PC-3 (cell line): ENCODE measurements at regions of chr5 and their contacts with region 1.

Region 1: DNA sequence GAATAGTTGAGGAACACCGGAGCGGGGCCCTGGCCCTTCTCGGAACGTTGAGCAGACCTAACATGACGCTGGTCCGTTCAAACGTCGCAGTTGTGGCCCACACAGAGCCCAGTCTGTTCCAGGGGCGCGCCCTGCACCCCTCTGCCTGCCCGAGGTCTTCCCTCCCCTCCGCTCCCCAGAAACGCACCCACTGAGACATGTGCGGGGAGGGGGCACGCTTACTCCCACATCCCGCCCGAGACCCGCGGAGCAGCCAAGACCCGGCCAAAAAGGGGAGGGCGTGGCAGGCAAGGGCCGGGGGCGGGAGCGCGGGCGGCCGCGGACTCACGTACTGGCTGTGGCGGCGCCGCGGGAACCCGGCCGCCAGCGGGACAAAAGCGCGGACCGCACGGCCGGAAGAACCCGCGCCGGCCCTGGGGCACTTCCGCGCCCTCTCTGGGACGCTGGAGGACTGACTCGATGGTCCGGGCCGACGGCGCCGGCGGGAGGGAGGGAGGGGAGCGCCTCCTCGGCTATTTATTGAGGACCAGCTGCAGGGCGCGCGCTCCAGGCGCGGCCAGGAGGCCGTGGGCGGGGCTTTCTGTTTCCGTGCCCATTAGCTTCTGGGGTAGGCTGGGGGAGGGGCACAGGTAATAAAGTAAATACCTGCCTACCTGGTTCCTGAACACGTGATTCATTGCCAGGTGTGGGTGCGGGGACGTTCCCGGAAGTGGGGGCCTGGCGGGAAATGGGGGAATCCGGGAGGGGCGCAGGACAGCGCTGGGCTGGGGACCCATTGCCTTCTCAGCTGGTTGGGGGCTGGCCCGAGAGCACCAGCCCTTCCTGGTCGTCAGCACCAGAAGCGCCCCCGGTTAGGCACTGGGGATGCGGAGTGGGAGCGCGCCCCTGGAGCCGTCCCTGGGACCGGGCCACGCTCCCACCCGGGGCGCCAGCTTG is at the start of gene ZFP62:
- DNase-seq: peak; percentile 98
- ATAC-seq: peak; percentile 94
- H3K4me3 ChIP-seq: peak within 1 kb of the TSS; percentile 99
- H3K27ac ChIP-seq: peak within 1 kb of the TSS; percentile 76
- H3K4me1 ChIP-seq: peaks cover 21% of the 10 kb centered on the region
- H3K27me3 ChIP-seq: no peaks in the 10 kb centered on the region
- CTCF ChIP-seq: 0 out of 2 replicates have a peak, but pooled peaks have one; percentile 15
- total RNA-seq, gene ZFP62: 16.6 and 24.3 TPM in 2 replicates

Region 2: GRCh38 chr5:180784497-180785097 is 76.6 kb before region 1 on chr5:
- CTCF ChIA-PET with region 1: interaction called, 7 read pairs
- POLR2A ChIA-PET with region 1: interaction called, 9 read pairs
- intact Hi-C with region 1: loop called (anchors 1 kb)
- DNase-seq: peak; percentile 92
- ATAC-seq: peak; percentile 72
- H3K4me3 ChIP-seq: no peak overlapping the region
- H3K27ac ChIP-seq: no peak overlapping the region
- H3K4me1 ChIP-seq: peaks cover 20% of the 10 kb centered on the region
- H3K27me3 ChIP-seq: no peaks in the 10 kb centered on the region
- CTCF ChIP-seq: peak; percentile 97

Region 3: DNA sequence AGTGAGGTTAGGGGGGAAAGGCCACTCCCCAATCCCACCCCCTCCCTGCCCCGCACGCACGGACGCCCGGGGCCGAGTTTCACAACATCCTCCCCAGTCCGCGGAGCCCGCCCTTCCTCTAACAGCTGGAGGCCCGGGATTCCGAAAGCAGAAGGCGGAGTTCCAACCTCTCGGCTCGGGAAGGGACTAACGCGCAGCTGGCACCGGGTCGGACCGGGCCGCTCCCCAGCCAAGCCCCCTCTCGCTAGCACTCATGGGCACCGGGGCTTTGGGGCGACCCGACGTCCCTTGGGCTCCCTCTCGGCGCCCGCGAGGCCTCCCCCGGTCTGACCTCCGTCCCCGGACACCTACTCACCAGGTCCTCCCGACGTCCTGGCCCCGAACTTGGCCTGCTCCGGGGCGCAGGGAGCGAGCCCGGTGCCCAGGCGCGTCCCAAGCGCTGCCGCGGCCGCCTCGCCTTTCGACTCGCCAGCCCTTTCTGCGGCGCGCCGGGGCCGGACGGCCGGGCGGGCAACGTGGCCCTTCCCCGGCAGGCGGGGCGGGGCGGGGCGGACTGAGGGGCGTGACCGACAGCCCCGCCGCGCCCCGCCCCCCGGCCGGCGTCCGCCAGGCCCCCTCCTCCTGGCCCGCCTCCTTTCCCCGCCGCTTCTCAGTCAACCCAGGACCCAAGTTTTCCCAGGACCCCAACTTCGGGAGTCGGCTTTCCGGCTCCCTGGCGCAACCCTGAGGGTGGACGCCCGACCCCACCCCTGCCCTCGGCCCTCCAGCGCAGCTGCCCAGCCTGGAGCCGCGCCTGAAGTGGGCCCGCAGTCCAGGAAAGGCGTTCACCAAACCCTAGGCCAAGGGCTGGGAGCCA is 58.6 kb before region 1 on chr5 and contains the start of gene MGAT1:
- CTCF ChIA-PET with region 1: interaction called, 6 read pairs
- POLR2A ChIA-PET with region 1: no interaction called
- intact Hi-C with region 1: loop called (anchors 2 kb)
- DNase-seq: peak; percentile 90
- ATAC-seq: peak; percentile 70
- H3K4me3 ChIP-seq: peak within 1 kb of the TSS; percentile 89
- H3K27ac ChIP-seq: peak within 1 kb of the TSS; percentile 70
- H3K4me1 ChIP-seq: peaks cover 51% of the 10 kb centered on the region
- H3K27me3 ChIP-seq: no peaks in the 10 kb centered on the region
- CTCF ChIP-seq: no peak
- total RNA-seq, gene MGAT1: 104 and 132 TPM in 2 replicates

Region 4: GRCh38 chr5:180810210-180810958 is 50.8 kb before region 1 on chr5:
- CTCF ChIA-PET with region 1: interaction called, 4 read pairs
- POLR2A ChIA-PET with region 1: no interaction called
- intact Hi-C with region 1: loop called (anchors 1 kb)
- DNase-seq: peak; percentile 98
- ATAC-seq: peak; percentile 84
- H3K4me3 ChIP-seq: peak overlapping the region; percentile 74
- H3K27ac ChIP-seq: peak overlapping the region; percentile 89
- H3K4me1 ChIP-seq: peaks cover 44% of the 10 kb centered on the region
- H3K27me3 ChIP-seq: no peaks in the 10 kb centered on the region
- CTCF ChIP-seq: no peak

Region 5: GRCh38 chr5:180825768-180826525 is 35.2 kb before region 1 on chr5:
- CTCF ChIA-PET with region 1: interaction called, 6 read pairs
- POLR2A ChIA-PET with region 1: no interaction called
- intact Hi-C with region 1: loop called (anchors 1 kb)
- DNase-seq: peak; percentile 99
- ATAC-seq: peak; percentile 81
- H3K4me3 ChIP-seq: no peak overlapping the region
- H3K27ac ChIP-seq: peak overlapping the region; percentile 13; the same call in 1 of the 2 replicates
- H3K4me1 ChIP-seq: peaks cover 21% of the 10 kb centered on the region
- H3K27me3 ChIP-seq: no peaks in the 10 kb centered on the region
- CTCF ChIP-seq: no peak

Region 6: DNA sequence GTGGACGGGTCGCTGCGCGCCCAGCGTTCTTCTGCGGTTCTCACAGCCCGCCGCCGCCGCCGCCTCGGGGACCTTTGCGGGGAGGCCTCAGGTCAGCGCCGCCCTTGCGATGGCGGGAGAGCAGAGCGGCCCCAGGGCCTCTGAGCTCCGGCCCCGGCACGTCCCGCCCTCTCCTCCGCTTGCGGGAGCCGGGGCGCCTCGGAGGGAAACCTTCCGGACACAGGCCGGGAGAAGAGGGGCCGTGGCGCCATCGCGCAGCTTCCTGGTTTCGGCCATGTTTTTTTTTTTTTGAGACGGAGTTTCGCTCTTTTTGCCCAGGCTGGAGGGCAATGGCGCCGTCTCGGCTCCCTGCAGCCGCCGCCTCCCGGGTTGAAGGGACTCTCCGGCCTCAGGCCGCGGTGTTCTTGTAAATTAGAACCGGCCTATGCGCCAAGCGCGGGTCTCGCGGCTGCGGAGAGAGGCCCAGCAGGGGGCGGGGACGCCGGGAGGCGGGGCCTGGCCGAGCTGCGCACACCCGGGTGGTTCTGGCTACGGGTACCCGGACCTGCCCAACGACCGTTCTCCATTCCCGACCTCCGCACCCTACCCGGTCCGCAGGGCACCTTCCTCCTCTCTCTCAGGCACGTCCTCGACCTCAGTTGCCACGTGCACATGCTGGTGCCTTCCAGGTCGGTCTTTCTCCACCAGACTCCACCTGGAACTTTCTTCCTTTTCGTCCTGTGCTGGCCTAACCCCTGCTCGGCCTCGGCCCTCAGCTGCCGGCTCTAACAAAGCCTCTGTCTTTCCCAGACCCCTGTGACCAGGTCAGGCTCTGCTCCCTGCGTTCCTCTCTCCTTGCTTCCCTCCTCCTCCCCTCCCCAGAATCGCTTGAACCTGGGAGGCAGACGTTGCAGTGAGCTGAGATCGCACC is 29.8 kb before region 1 on chr5:
- CTCF ChIA-PET with region 1: interaction called, 5 read pairs
- POLR2A ChIA-PET with region 1: no interaction called
- intact Hi-C with region 1: loop called (anchors 1 kb)
- DNase-seq: peak; percentile 80
- ATAC-seq: peak; percentile 96
- H3K4me3 ChIP-seq: peak overlapping the region; percentile 77
- H3K27ac ChIP-seq: peak overlapping the region; percentile 65
- H3K4me1 ChIP-seq: peaks cover 22% of the 10 kb centered on the region
- H3K27me3 ChIP-seq: no peaks in the 10 kb centered on the region
- CTCF ChIP-seq: no peak

Region 7: GRCh38 chr5:181151146-181151545 is 290.0 kb after region 1 on chr5:
- CTCF ChIA-PET with region 1: no interaction called
- POLR2A ChIA-PET with region 1: no interaction called
- intact Hi-C with region 1: loop called (anchors 2 kb)
- DNase-seq: peak; percentile 64
- ATAC-seq: peak; percentile 58
- H3K4me3 ChIP-seq: no peak overlapping the region
- H3K27ac ChIP-seq: peak overlapping the region; percentile 95
- H3K4me1 ChIP-seq: peaks cover 55% of the 10 kb centered on the region
- H3K27me3 ChIP-seq: no peaks in the 10 kb centered on the region
- CTCF ChIP-seq: peak; percentile 46; the same call in 1 of the 2 replicates